Activated CD4-positive, alpha-beta T cell treated with anti-CD3 and anti-CD28 coated beads, Interleukin-2, amount 10 ng/mL, durations not matched to agents 7 days and 5 days (primary cell): ENCODE measurements at regions of chr6 and their contacts with region 1.

Region 1: DNA sequence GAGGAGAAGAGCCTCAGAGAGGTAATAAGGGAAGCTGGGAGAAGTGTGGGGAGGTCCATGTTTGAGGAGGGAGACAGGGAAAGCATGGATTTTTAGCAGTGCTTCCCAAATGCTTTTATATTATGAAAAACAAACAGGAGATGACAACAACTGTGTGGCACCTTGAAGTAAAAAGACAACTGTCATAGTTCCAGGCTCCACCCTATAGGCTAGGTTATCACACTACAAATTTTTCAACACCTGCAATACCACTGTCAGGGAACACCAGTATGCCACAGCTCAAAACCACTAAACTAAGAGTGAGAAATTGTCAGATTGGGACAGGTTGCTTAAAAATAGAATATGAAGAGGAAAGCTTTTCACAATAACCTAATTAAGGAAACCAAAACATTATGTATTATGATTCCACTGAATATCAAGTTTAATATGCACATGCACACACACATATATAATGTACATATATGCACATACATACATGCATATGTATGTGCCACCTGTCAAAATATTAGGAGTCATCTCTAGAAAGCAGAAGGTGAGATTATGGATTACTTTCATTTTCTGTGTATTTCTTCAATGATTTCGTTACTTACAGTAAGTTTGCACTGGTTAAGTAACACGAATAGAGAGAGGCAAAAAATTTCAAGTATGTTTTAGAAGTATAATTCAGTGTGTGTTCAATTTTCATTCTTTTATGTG is 261.2 kb downstream of the PTPRK start:
- DNase-seq: peak; percentile 9
- H3K4me3 Mint-ChIP-seq: peak overlapping the region; percentile 64
- H3K27ac Mint-ChIP-seq: peak overlapping the region; percentile 87
- H3K4me1 Mint-ChIP-seq: peaks cover 29% of the 10 kb centered on the region
- H3K27me3 Mint-ChIP-seq: no peaks in the 10 kb centered on the region

Region 2: GRCh38 chr6:128095362-128095761 is 163.8 kb before region 1 on chr6:
- CTCF ChIA-PET with region 1: no interaction called
- POLR2A ChIA-PET with region 1: interaction called, 10 read pairs
- DNase-seq: no peak
- H3K4me3 Mint-ChIP-seq: no peak overlapping the region
- H3K27ac Mint-ChIP-seq: no peak overlapping the region
- H3K4me1 Mint-ChIP-seq: peaks cover 26% of the 10 kb centered on the region
- H3K27me3 Mint-ChIP-seq: no peaks in the 10 kb centered on the region

Region 3: GRCh38 chr6:128235556-128235955 is 23.6 kb before region 1 on chr6:
- CTCF ChIA-PET with region 1: no interaction called
- POLR2A ChIA-PET with region 1: no interaction called
- DNase-seq: no peak
- H3K4me3 Mint-ChIP-seq: no peak overlapping the region
- H3K27ac Mint-ChIP-seq: no peak overlapping the region
- H3K4me1 Mint-ChIP-seq: peaks cover 6% of the 10 kb centered on the region
- H3K27me3 Mint-ChIP-seq: no peaks in the 10 kb centered on the region

Region 4: GRCh38 chr6:128605961-128606360 is 346.8 kb after region 1 on chr6:
- CTCF ChIA-PET with region 1: no interaction called
- POLR2A ChIA-PET with region 1: no interaction called
- DNase-seq: no peak
- H3K4me3 Mint-ChIP-seq: no peak overlapping the region
- H3K27ac Mint-ChIP-seq: no peak overlapping the region
- H3K4me1 Mint-ChIP-seq: no peaks in the 10 kb centered on the region
- H3K27me3 Mint-ChIP-seq: no peaks in the 10 kb centered on the region

Region 5: DNA sequence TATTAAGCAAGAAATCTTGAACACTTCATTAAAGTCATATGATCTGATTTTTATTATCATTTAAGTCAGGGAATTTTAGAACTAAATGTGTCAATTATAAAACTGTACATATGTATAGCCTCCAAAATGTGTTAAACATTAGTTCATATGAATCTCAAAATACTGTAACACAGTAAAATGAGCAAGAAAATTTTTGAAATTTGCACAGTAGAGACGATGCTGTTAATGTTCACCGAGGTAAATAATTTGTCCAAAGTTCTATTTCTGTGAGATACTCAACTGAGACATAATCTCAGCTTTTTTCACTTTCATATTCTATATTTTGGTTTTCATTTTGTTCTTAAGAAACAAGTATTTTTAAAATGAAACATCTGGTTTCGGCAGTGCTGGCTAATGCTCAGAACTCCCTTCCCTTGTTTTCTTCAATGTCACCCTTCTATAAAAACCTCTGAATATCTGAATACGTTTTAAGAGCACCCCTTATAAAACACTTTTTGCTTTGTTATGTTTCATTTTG is 976.9 kb after region 1 on chr6:
- CTCF ChIA-PET with region 1: no interaction called
- POLR2A ChIA-PET with region 1: no interaction called
- DNase-seq: no peak
- H3K4me3 Mint-ChIP-seq: no peak overlapping the region
- H3K27ac Mint-ChIP-seq: no peak overlapping the region
- H3K4me1 Mint-ChIP-seq: no peaks in the 10 kb centered on the region
- H3K27me3 Mint-ChIP-seq: no peaks in the 10 kb centered on the region